Activated CD4-positive, alpha-beta T cell treated with anti-CD3 and anti-CD28 coated beads for 36 hours (primary cell): ENCODE measurements at regions of chr2 and their contacts with region 1.

Region 1: GRCh38 chr2:73985308-73986084 is 786 bp downstream of the TET3 start:
- DNase-seq: peak; percentile 83
- ATAC-seq: peak; percentile 47
- H3K4me3 Mint-ChIP-seq: peak overlapping the region; percentile 87
- H3K27ac Mint-ChIP-seq: peak overlapping the region; percentile 73
- H3K4me1 Mint-ChIP-seq: peaks cover 71% of the 10 kb centered on the region
- H3K27me3 Mint-ChIP-seq: no peaks in the 10 kb centered on the region

Region 2: DNA sequence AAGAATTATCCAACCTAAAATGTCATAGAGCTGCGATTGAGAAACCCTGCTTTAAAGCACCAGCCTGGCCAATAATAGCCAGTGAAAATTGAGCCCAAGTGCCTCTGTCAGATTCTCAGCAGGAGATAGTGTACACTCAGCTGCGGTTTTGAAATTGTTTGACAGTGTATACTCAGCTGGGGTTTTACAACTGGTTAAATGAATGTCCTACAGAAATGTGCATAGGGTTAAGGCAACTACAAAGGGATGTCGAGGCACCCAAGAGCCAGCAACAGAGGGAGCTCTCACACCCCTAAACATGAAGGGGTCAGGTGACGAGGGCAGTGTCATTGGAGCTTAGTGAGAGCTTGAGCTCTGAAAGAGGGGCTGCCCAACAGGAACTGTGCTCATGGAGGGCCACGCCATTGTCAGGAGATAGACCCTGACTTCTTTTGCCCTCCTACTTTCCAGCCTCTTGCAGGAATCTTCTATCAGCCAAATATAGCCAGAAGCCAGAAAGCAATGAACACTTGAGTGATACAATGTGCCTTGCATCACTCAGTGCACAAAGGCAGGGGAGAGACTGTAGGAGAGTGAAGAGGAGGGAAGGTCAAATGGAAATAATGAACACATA is 77.5 kb before region 1 on chr2:
- CTCF ChIA-PET with region 1: interaction called, 6 read pairs
- POLR2A ChIA-PET with region 1: no interaction called
- intact Hi-C with region 1: loop called in 1 of 2 experiments (anchors 1 kb)
- DNase-seq: peak; percentile 77
- ATAC-seq: peak; percentile 96
- H3K4me3 Mint-ChIP-seq: no peak overlapping the region
- H3K27ac Mint-ChIP-seq: no peak overlapping the region
- H3K4me1 Mint-ChIP-seq: peaks cover 7% of the 10 kb centered on the region
- H3K27me3 Mint-ChIP-seq: no peaks in the 10 kb centered on the region

Region 3: DNA sequence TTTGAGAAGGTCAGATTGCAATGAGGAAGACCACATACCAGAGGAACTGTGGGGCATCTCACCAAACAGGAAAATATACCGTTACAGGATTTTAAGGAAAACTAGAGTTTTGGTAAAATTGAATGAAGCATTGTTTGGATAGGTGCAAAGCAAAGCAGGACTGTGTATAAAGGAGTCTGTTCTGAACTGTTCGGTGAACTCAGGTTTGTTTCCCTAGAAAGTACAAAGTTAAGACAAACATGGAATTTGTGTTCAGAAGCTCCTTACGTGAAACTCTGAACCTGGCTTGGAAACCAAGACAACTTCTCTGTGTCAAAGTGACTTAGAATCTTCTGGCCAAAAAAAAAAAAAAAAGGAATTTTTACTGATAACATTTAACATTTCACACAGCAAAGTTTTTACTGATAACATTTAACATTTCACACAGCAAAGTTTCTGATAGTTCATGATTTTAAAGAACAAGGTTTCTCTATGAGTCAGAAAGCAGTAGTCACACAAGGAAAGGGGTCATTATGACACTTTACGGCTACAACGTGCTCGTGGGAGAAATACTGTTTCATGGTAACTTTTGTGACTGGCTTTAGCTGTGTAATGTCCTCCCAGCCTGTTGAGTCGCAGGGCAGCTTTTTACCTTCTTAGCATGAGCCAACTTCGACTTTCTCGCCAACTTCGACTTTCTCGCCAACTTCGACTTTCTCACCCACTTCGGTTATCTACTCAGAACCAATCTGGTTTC is 21.9 kb before region 1 on chr2:
- CTCF ChIA-PET with region 1: interaction called, 4 read pairs
- POLR2A ChIA-PET with region 1: interaction called, 9 read pairs
- intact Hi-C with region 1: loop called in 1 of 2 experiments (anchors 2 kb)
- DNase-seq: peak; percentile 72
- ATAC-seq: peak; percentile 95
- H3K4me3 Mint-ChIP-seq: peak overlapping the region; percentile 37
- H3K27ac Mint-ChIP-seq: peak overlapping the region; percentile 90
- H3K4me1 Mint-ChIP-seq: peaks cover 41% of the 10 kb centered on the region
- H3K27me3 Mint-ChIP-seq: no peaks in the 10 kb centered on the region

Region 4: DNA sequence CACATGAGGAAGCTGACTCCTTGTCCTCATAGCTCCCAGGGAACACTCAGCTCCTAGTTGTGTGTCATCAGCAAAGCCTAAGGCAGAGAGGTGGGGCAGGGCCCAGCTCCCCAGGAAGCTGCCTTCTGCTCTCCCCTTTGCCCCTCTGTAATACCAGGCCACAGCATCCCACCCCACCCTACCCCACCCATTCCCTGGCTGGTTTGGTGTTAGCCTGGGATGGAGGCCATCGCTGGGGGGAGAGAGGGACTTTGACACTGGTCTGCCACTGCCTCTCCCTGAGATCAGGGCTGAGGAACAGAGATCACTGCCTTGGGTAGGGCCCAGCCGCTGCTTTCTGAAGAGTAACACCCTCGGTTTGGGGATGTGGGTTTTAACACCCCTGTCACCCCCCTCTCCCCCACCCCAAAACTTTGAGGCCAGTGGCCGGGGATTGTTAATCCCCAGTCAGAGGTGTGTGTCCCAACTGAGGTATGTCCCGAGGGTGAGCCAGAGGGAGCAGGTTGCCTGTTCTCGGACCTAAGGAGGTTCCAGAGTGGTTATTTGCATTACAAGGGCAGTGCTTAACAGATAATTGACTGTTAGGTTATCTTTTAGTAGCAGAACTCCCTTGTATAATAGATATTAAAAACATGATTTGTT is 40.6 kb after region 1 on chr2:
- CTCF ChIA-PET with region 1: interaction called, 3 read pairs
- POLR2A ChIA-PET with region 1: no interaction called
- intact Hi-C with region 1: loop called (anchors 2 to 5 kb)
- DNase-seq: peak; percentile 37
- ATAC-seq: peak; percentile 29
- H3K4me3 Mint-ChIP-seq: no peak overlapping the region
- H3K27ac Mint-ChIP-seq: peak overlapping the region; percentile 74
- H3K4me1 Mint-ChIP-seq: peaks cover 71% of the 10 kb centered on the region
- H3K27me3 Mint-ChIP-seq: no peaks in the 10 kb centered on the region

Region 5: DNA sequence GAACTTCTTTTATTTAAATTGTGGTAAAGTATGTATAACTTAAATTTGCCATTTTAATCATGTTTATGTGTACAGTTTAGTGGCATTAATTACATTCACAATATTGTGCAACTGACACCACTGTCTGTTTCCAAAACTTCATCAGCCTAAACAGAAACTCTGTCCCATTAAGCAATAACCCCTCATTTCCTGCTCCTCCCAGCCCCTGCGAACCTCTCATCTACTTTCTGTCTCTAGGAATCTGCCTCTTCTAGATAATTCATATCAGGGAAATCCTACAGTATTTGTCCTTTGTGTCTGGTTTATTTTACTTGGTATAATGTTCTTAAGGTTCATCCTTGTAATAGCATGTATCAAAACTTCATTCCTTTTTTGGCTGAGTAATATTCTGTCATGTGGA is 87.1 kb after region 1 on chr2:
- CTCF ChIA-PET with region 1: interaction called, 3 read pairs
- POLR2A ChIA-PET with region 1: no interaction called
- intact Hi-C with region 1: loop called in 1 of 2 experiments (anchors 5 kb)
- DNase-seq: no peak
- ATAC-seq: no peak
- H3K4me3 Mint-ChIP-seq: no peak overlapping the region
- H3K27ac Mint-ChIP-seq: peak overlapping the region; percentile 3
- H3K4me1 Mint-ChIP-seq: peaks cover 13% of the 10 kb centered on the region
- H3K27me3 Mint-ChIP-seq: no peaks in the 10 kb centered on the region

Region 6: GRCh38 chr2:74198461-74199274 is 213.2 kb after region 1 on chr2 and contains the start of gene MTHFD2:
- CTCF ChIA-PET with region 1: no interaction called
- POLR2A ChIA-PET with region 1: no interaction called
- intact Hi-C with region 1: loop called in 1 of 2 experiments (anchors 1 kb)
- DNase-seq: peak; percentile 96
- ATAC-seq: peak; percentile 90
- H3K4me3 Mint-ChIP-seq: peak within 1 kb of the TSS; percentile 100
- H3K27ac Mint-ChIP-seq: peak within 1 kb of the TSS; percentile 100
- H3K4me1 Mint-ChIP-seq: peaks cover 40% of the 10 kb centered on the region
- H3K27me3 Mint-ChIP-seq: no peaks in the 10 kb centered on the region
- total RNA-seq, gene MTHFD2: 411 to 453 TPM